ENCODE measurements at regions of chr7 and their contacts with region 1.

Region 1: DNA sequence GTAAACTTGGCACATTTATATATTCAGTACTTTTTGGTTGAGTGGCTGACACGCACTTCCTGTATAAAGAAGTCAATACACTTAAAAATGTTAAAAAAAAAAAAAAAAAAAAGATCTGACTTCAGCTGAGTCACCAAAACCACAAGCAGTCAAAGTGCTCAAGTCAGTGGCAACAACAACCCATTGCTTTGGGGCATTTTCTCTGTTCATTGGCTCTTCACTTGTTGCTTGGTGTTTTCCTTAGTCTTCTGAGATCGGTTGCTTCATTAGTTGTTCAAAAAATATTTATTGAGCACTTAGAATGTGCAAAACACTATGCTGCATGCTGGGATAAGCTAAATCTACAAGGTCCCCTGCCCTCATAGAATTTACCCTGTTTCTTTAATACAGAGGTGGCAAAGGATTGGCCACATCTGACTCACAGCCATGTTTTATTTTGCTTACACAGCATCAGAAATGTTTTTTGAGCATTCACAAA is 63.7 kb downstream of the ZNRF2 start:
- DNase-seq: peak; percentile 87
- H3K4me3 Mint-ChIP-seq: peak overlapping the region; percentile 67
- H3K27ac Mint-ChIP-seq: peak overlapping the region; percentile 89
- H3K4me1 Mint-ChIP-seq: peaks cover 54% of the 10 kb centered on the region
- H3K27me3 Mint-ChIP-seq: no peaks in the 10 kb centered on the region

Region 2: DNA sequence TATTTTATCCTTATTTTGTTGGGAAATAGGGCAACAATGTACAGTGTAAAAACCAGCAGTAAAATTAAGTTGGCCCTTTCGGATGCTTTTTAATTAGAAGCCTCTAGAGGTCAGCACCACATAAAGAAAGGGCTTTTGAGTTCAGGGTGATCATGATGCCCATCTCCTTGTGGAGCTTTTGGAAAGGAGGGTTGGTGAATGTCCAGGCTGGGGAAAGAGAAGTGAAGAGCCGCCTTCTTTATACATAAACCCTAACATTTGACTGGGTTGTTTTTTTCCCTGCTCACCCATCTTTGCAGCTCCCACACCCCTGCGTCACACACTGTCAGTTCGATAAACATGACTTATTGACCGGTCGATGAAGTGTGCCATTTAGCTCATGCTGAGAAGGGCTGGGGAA is 183.6 kb before region 1 on chr7:
- intact Hi-C with region 1: loop called (anchors 5 kb)
- DNase-seq: no peak
- H3K4me3 Mint-ChIP-seq: no peak overlapping the region
- H3K27ac Mint-ChIP-seq: no peak overlapping the region
- H3K4me1 Mint-ChIP-seq: peaks cover 35% of the 10 kb centered on the region
- H3K27me3 Mint-ChIP-seq: no peaks in the 10 kb centered on the region

Region 3: DNA sequence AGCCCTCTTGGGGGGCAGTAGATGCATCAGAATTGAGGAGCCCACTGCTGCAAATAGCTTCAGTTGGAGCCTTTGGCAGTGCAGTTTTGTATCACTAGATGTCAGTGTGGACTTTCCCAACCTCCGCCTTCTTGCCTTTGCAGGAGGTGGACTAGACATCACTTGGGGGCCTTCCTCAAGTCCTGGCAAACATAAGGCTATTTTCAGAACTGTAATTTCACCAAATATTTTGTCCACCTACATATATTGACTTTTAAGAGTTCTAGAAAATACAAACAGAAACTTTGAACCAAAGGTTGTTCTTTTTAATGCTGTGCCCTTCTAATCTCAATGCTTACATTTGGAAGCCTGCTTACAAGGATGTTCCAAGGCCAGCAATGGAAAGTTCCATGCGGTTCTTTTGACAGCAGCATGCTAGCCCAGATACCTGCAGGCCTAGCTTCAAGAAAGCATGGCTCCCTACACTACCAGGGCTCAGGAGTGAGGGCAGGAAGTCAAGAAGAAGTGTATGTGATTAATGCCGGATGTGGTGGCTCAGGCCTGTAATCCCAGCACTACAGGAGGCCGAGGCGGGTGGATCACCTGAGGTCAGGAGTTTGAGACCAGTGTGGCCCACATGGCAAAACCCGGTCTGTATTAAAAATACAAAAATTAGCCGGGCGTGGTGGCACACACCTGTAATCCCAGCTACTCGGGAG is 71.8 kb before region 1 on chr7:
- intact Hi-C with region 1: loop called (anchors 2 kb)
- DNase-seq: peak; percentile 87
- H3K4me3 Mint-ChIP-seq: no peak overlapping the region
- H3K27ac Mint-ChIP-seq: no peak overlapping the region
- H3K4me1 Mint-ChIP-seq: peaks cover 6% of the 10 kb centered on the region
- H3K27me3 Mint-ChIP-seq: peaks cover 3% of the 10 kb centered on the region

Region 4: GRCh38 chr7:30308389-30308788 is 39.7 kb before region 1 on chr7:
- intact Hi-C with region 1: loop called (anchors 5 kb)
- DNase-seq: no peak
- H3K4me3 Mint-ChIP-seq: no peak overlapping the region
- H3K27ac Mint-ChIP-seq: peak overlapping the region; percentile 37
- H3K4me1 Mint-ChIP-seq: peaks cover 30% of the 10 kb centered on the region
- H3K27me3 Mint-ChIP-seq: no peaks in the 10 kb centered on the region

Region 5: GRCh38 chr7:30322271-30323005 is 25.7 kb before region 1 on chr7:
- intact Hi-C with region 1: loop called (anchors 1 kb)
- DNase-seq: peak; percentile 79
- H3K4me3 Mint-ChIP-seq: peak overlapping the region; percentile 78
- H3K27ac Mint-ChIP-seq: peak overlapping the region; percentile 96
- H3K4me1 Mint-ChIP-seq: peaks cover 42% of the 10 kb centered on the region
- H3K27me3 Mint-ChIP-seq: no peaks in the 10 kb centered on the region

Region 6: GRCh38 chr7:30330134-30331111 is 17.7 kb before region 1 on chr7:
- intact Hi-C with region 1: loop called (anchors 1 kb)
- DNase-seq: peak; percentile 78
- H3K4me3 Mint-ChIP-seq: peak overlapping the region; percentile 71
- H3K27ac Mint-ChIP-seq: peak overlapping the region; percentile 59
- H3K4me1 Mint-ChIP-seq: peaks cover 35% of the 10 kb centered on the region
- H3K27me3 Mint-ChIP-seq: peaks cover 3% of the 10 kb centered on the region

Region 7: DNA sequence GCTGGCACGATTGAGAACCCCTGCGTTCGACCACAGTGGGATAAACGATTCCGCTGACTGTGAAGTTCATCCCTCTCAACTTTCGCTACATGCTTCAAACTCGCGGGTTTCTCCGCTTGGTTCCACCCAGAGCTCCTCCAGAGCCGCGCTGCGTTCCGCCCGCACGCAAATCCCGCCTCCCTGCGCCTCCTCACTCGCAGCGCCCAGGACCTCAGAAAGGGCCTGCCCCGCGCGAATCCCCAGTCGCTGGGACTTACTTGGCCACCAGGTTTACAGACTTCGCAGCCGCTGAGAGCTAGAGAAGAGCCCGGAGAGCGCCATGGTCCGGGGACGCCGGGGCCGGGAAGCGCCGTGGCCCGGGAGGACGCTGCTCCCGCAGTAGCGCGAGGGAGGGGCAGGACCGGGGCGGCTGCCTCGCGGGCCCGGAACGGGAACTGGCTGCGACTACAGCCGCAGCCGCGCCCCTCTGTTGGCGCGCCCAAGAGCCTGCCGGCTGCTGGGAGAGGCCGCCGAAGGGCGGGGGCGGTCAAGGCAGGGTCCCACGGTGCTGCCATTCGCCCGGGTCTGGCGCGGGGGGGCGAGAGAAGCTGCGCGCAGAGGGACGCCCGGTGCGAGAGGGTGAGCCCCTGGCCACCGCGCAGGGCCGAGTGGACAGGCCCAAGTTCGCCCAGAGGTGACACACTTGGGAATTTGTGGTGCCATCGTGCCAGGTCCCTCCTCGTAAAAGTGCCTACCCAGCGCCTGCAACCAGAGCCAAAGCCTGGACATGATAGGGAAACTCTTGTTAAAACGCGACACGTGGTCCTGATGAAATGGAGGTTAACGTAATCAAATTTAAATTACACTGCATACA is 130.5 kb after region 1 on chr7 and contains the start of gene NOD1:
- intact Hi-C with region 1: loop called (anchors 1 kb)
- DNase-seq: peak; percentile 93
- H3K4me3 Mint-ChIP-seq: peak within 1 kb of the TSS; percentile 92
- H3K27ac Mint-ChIP-seq: peak within 1 kb of the TSS; percentile 93
- H3K4me1 Mint-ChIP-seq: peaks cover 45% of the 10 kb centered on the region
- H3K27me3 Mint-ChIP-seq: no peaks in the 10 kb centered on the region
- total RNA-seq, gene NOD1: 11.6 and 12.9 TPM in 2 replicates